Thyroid gland (tissue), 4 donors: ENCODE measurements at regions of chr5 and their contacts with region 1.

Region 1: GRCh38 chr5:181159286-181159829 is 12.0 kb downstream of the OR2V2 start:
- DNase-seq: peak; percentile 81 to 87
- H3K4me3 ChIP-seq: no peak overlapping the region
- H3K27ac ChIP-seq: no peak overlapping the region
- H3K4me1 ChIP-seq: no peaks in the 10 kb centered on the region
- H3K27me3 ChIP-seq: no peaks in the 10 kb centered on the region
- CTCF ChIP-seq: peak; percentile 77 to 92 (median 83)
- POLR2A ChIP-seq: no peak

Region 2: DNA sequence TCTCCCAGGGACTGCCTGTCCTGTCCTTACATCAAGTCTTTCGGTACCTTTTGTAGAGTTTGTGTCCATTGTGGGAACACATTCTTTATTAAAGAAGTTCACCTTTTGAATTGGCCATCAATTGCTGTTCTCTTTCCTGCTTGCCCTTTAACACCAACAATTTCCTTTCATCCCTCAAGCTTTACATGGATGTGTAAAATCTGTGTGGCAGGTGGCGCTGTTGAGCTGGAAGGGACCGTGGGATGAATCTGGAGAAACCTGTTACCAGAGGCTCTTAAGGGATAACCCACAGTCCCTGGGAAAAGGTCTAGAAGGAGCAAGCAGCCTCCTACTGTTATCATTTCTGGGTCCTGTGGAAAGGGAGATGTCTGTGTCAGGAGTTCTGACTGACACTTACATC is 290.4 kb before region 1 on chr5:
- intact Hi-C with region 1: loop called (anchors 5 kb)
- DNase-seq: peak; percentile 93 to 97
- H3K4me3 ChIP-seq: no peak overlapping the region
- H3K27ac ChIP-seq: peak overlapping the region in 2 of 3 donors; percentile 59 to 65
- H3K4me1 ChIP-seq: peaks cover 0 to 15% of the 10 kb centered on the region in 2 donors
- H3K27me3 ChIP-seq: no peaks in the 10 kb centered on the region
- CTCF ChIP-seq: peak; percentile 66 to 95 (median 84)
- POLR2A ChIP-seq: no peak

Region 3: GRCh38 chr5:181100121-181101015 is 59.0 kb before region 1 on chr5:
- intact Hi-C with region 1: no loop called
- DNase-seq: peak; percentile 62 to 87
- H3K4me3 ChIP-seq: no peak overlapping the region
- H3K27ac ChIP-seq: no peak overlapping the region
- H3K4me1 ChIP-seq: peaks cover 6% of the 10 kb centered on the region in 2 donors
- H3K27me3 ChIP-seq: peaks cover 9% of the 10 kb centered on the region
- CTCF ChIP-seq: no peak
- POLR2A ChIP-seq: peak in 1 of 2 donors; percentile 32

Region 4: DNA sequence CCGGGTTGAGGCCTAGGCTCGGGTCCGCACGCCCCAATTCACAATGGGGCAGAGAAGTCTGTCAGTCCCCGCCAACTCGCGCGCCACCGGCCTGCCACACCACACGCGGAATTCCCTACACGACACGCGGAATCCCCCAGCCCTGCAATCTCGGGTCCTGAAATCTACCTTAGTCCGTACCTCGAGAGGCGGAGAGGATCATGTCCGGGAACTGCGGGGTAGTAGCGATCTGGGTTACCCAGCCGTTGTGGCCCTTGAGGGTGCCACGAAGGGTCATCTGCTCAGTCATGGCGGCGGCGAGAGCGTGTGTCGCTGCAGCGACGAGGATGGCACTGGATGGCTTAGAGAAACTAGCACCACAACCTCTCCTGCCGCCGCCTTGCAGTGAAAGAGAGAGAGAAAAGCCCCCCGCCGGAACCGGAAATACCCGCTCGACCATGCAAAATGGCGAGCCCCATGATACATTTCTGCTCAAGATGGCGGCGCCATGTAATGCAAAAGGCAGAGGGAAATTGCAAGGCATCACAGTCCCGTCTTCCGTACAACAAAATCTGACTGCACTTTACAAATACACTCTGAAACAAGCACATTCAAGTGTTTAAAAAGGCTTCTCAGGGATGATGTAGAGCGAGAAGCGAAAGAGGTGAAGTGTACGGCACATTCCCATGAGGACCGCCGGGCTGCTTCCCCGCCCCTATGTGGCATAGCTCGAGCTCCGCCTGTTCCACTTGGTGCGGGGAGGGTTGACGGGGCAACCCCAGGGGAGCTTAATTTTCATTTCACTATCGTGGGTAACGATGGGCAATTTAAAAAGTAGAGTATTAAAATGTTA is 84.4 kb after region 1 on chr5 and contains the start of gene RACK1:
- intact Hi-C with region 1: no loop called
- DNase-seq: peak; percentile 92
- H3K4me3 ChIP-seq: peak within 1 kb of the TSS; percentile 42 to 67 (median 59)
- H3K27ac ChIP-seq: peak within 1 kb of the TSS; percentile 80 to 95 (median 93)
- H3K4me1 ChIP-seq: peaks cover 32 to 43% of the 10 kb centered on the region in 2 donors
- H3K27me3 ChIP-seq: no peaks in the 10 kb centered on the region
- CTCF ChIP-seq: peak in 1 of 6 experiments; percentile 16
- POLR2A ChIP-seq: peak; percentile 71 to 82
- total RNA-seq, gene RACK1: 2,254 to 3,332 (median 2,569) TPM